ENCODE measurements at regions of chr3 and their contacts with region 1.

Region 1: DNA sequence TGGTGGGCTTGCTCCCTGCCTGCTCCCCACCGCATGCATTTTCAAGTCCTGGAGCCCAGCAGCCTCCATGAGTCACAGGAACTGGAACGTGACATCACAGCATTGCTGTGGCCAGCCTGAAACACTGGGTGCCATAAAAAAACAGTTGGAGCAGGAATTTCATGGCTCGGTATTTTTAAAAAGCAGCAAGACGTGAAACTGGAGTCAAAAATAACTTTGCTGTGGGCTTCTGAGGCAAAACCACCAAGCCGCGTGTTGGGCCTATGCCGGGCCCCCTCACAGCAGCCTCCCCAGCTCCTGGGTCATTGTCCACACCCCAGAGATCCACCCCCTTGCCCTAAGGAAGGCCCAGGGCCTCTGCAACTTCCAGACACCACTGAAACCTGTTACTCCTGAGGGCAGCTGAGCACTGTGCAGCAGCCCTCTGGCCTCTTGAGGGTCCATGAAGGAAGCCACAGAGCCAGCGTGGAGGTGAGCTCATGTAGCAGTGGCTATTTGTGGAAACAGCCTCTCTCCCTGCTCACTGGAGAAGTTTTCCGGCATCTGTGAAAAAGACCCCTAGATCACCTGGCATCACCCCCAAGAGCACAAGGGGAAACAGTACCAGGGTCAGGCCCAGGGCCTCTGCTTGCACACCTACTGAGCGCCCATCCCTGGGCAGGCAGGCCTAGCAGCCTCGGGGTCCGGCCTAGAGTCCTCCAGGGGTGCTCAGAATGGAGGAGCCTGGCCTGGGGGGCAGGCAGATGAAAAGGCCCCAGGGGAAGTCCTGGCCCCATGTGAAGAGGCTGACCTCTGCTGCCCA is 34.0 kb upstream of the DUSP7 start:
- DNase-seq: peak; percentile 92
- ATAC-seq: peak; percentile 75
- H3K4me3 ChIP-seq: no peak overlapping the region
- H3K27ac ChIP-seq: peak overlapping the region; percentile 89
- H3K4me1 ChIP-seq: peaks cover 50% of the 10 kb centered on the region
- H3K27me3 ChIP-seq: no peaks in the 10 kb centered on the region
- CTCF ChIP-seq: no peak
- POLR2A ChIP-seq: no peak
- RAD21 ChIP-seq: peak; percentile 13; the same call in 1 of the 2 replicates

Region 2: DNA sequence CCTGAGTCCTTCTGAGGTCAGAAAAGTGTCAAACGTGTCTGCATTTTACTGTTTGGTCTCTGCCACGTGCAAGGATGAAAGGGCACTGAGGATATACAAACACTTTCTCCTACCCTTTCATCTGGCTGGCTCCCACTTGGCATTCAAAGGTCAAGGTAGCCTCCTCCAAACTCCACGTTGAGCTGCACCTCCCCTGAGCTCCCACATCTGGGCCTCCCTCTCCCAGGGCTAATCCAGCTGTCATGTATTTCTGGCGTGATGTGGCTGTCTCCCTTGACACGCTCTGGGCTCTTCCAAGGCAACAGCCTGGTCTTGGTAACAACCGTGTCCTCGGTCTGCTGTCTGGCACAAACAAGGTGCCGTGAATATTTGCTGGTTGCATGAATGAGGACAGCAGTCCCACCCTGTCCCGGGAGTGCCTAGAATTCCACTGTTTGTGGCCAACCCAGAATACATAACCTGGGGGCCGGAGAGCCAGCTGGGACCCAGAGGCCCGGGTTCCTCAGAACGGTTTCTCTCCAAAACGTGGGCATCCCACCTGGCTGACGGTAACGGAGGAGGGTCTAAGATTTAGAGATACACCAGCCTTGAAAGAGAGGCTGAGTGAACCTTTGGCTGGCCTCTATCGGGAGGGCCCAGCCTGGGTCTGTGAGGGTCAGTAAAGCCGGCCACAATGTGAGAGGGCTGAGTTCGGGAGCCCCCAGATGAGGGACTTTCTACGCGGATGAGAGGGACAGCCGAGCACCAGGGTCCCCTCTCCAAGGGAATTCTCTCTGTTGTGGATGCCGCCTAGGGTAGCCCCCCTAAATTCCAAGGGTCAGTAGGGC is 614.5 kb after region 1 on chr3:
- CTCF ChIA-PET with region 1: no interaction called
- POLR2A ChIA-PET with region 1: interaction called, 14 read pairs
- dilution Hi-C with region 1: no loop called
- in situ Hi-C with region 1: no loop called
- intact Hi-C with region 1: no loop called
- DNase-seq: peak; percentile 33
- ATAC-seq: peak; percentile 5
- H3K4me3 ChIP-seq: peak overlapping the region; percentile 95
- H3K27ac ChIP-seq: peak overlapping the region; percentile 91
- H3K4me1 ChIP-seq: peaks cover 5% of the 10 kb centered on the region
- H3K27me3 ChIP-seq: no peaks in the 10 kb centered on the region
- CTCF ChIP-seq: no peak
- POLR2A ChIP-seq: no peak
- RAD21 ChIP-seq: no peak

Measured in IMR-90 (cell line).